Heart right ventricle (tissue), 16 donors: ENCODE measurements at regions of chr1 and their contacts with region 1.

Region 1: GRCh38 chr1:7262611-7263010 is 477.4 kb downstream of the CAMTA1 start:
- DNase-seq: no peak
- ATAC-seq: no peak
- H3K4me3 ChIP-seq: no peak overlapping the region
- H3K27ac ChIP-seq: no peak overlapping the region
- H3K4me1 ChIP-seq: no peaks in the 10 kb centered on the region
- H3K27me3 ChIP-seq: peaks cover 0 to 12% (median 3%) of the 10 kb centered on the region in 7 donors
- CTCF ChIP-seq: no peak

Region 2: GRCh38 chr1:7247158-7247557 is 15.5 kb before region 1 on chr1:
- intact Hi-C with region 1: loop called in 1 of 10 experiments (anchors 1 kb)
- DNase-seq: no peak
- ATAC-seq: no peak
- H3K4me3 ChIP-seq: no peak overlapping the region
- H3K27ac ChIP-seq: no peak overlapping the region
- H3K4me1 ChIP-seq: no peaks in the 10 kb centered on the region
- H3K27me3 ChIP-seq: peaks cover 0 to 17% (median 0%) of the 10 kb centered on the region in 7 donors
- CTCF ChIP-seq: no peak

Region 3: GRCh38 chr1:7281821-7282220 is 19.2 kb after region 1 on chr1:
- intact Hi-C with region 1: loop called in 1 of 10 experiments (anchors 1 kb)
- DNase-seq: no peak
- ATAC-seq: peak in 1 of 8 donors; percentile 22
- H3K4me3 ChIP-seq: no peak overlapping the region
- H3K27ac ChIP-seq: no peak overlapping the region
- H3K4me1 ChIP-seq: no peaks in the 10 kb centered on the region
- H3K27me3 ChIP-seq: peaks cover 0 to 18% (median 4%) of the 10 kb centered on the region in 7 donors
- CTCF ChIP-seq: no peak